ENCODE measurements at regions of chr15 and their contacts with region 1.

Region 1: DNA sequence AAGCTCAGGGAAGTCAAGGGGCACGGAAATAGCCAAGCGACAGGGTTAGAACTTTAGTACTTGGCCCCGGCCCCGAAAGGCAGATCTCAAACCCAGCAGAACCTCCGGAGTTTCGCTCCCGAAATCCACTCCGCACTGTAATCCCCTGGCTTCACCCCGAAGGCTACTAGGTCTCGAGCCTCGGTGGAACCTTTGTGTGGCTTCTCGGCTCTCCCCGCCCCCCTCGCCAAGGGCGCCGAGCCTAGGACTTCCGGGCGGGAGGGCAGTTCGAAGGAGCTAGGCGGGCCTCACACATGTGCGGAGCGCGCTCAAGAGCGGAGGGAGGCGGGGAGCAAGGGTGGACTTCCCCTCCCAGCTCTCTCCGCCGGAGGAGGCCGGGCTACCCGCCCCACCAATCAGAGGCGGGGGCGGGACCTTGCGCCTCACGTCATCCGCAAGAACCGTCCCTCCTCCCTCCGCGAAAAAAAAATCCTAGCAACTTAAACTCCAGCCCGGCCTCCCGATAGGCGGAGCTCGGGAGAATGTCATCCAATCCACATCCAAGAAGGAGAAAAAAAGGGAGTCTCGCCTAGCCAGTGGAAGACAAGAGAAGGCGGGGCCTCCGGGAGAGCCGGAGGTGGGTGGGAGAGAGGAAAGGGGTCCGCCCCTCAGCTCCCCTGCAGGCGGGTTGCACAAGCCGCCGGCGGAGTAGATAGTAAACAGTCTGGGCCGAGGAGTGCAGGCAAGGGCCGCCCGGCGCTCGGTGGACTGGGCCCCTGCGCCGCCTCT is 2.4 kb upstream of the SIN3A start:
- DNase-seq: peak; percentile 94 to 100 (median 97)
- ATAC-seq: peak; percentile 40 to 41
- H3K4me3 Mint-ChIP-seq: peak overlapping the region; percentile 94 to 99 (median 97)
- H3K27ac Mint-ChIP-seq: peak overlapping the region; percentile 94 to 99 (median 98)
- H3K4me1 Mint-ChIP-seq: peaks cover 24 to 47% (median 37%) of the 10 kb centered on the region in 4 donors
- H3K27me3 Mint-ChIP-seq: no peaks in the 10 kb centered on the region

Region 2: DNA sequence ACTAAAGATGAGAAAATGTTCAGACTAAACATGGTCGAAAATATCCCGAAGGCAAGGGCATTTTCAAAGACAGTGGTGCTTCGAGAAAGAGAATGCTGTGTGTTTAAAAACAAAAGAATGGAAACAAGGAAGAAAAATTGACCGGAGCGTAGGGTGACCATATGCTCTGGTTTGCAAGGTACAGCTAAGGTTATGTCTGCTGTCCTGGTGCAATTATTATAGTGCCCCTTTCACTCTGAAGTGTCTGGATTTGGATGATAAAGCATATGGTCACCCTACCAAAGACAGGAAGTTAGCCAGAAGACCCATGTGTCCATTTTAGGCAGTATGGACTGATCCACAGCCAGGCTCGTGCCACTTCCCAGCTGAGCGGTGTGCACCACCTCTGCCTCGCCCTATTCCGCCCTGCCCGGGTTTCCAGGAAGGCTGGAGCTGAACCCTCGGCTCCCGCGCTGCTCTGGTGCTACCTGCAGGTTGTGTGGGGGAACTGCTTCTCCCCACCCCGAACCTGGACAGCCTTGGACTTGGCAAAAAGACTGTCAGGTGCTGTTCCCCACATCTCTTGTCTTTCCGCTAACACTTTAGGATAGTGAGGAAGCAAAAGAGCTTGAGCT is 146.0 kb before region 1 on chr15:
- POLR2A ChIA-PET with region 1: no interaction called
- DNase-seq: peak in 1 of 10 donors; percentile 7
- ATAC-seq: peak in 1 of 2 donors; percentile 30
- H3K4me3 Mint-ChIP-seq: no peak overlapping the region
- H3K27ac Mint-ChIP-seq: no peak overlapping the region
- H3K4me1 Mint-ChIP-seq: peaks cover 0 to 6% (median 3%) of the 10 kb centered on the region in 4 donors
- H3K27me3 Mint-ChIP-seq: peaks cover 10 to 49% (median 34%) of the 10 kb centered on the region in 5 donors

Region 3: GRCh38 chr15:75431682-75432081 is 22.2 kb before region 1 on chr15:
- POLR2A ChIA-PET with region 1: interaction called, 10 read pairs
- DNase-seq: no peak
- ATAC-seq: no peak
- H3K4me3 Mint-ChIP-seq: no peak overlapping the region
- H3K27ac Mint-ChIP-seq: peak overlapping the region in 1 of 10 donors; percentile 8
- H3K4me1 Mint-ChIP-seq: peaks cover 18 to 52% (median 45%) of the 10 kb centered on the region in 4 donors
- H3K27me3 Mint-ChIP-seq: no peaks in the 10 kb centered on the region

Region 4: GRCh38 chr15:75578948-75579920 is 125.3 kb after region 1 on chr15 and contains the start of gene PTPN9:
- POLR2A ChIA-PET with region 1: interaction called, 38 read pairs
- DNase-seq: peak; percentile 33 to 82 (median 60)
- ATAC-seq: peak; percentile 80 to 84
- H3K4me3 Mint-ChIP-seq: peak within 1 kb of the TSS; percentile 91 to 96 (median 92)
- H3K27ac Mint-ChIP-seq: peak within 1 kb of the TSS; percentile 88 to 95 (median 92)
- H3K4me1 Mint-ChIP-seq: peaks cover 13 to 28% (median 22%) of the 10 kb centered on the region in 4 donors
- H3K27me3 Mint-ChIP-seq: no peaks in the 10 kb centered on the region
- polyA plus RNA-seq, gene PTPN9: 12.9 to 19.6 (median 18.2) TPM

Region 5: DNA sequence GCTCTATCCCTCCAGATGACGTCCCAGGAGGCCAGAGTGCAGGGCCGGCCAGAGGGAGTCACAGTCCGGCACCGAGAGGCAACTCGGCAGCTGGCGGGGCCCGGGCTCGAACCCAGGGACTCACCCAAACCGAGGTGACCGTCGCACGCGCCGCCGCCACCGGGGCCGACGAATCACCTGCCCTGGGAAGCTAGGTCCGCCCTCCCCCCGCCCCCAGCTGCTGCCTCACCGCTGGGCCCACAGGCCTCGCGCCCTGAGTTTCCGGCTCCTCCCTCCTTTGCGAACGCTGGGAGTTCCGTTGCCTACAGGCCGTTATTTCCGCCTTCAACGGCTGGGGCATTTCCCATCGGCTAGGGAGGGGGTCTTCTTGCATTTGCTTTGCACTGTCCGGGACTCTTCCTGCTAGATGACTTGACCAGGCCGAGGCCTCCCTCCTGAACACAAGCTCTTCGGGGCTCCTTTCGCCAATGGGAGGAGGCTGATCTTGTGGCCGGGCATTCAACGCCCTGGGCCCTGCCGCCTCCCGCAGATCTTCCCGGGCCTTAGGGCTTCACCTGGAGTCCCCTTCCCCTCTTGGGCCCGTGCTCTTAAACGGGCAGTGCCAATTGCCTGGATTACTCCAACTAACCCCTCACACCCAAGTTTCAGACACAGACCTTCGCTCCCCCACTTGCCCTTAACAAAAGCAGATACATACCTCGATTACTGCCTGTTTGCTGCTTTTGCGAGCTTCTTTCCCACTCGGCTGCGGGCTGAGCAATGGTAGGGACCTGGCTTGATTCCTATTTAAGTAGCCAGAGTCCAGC is 171.9 kb after region 1 on chr15 and contains the start of gene SNUPN:
- POLR2A ChIA-PET with region 1: interaction called, 52 read pairs
- DNase-seq: peak; percentile 83 to 96 (median 90)
- ATAC-seq: peak; percentile 89 to 92
- H3K4me3 Mint-ChIP-seq: peak within 1 kb of the TSS; percentile 90 to 100 (median 96)
- H3K27ac Mint-ChIP-seq: peak within 1 kb of the TSS; percentile 91 to 100 (median 98)
- H3K4me1 Mint-ChIP-seq: peaks cover 16 to 39% (median 32%) of the 10 kb centered on the region in 4 donors
- H3K27me3 Mint-ChIP-seq: no peaks in the 10 kb centered on the region
- polyA plus RNA-seq, gene SNUPN: 20.1 to 33.7 (median 21.7) TPM

Region 6: GRCh38 chr15:75647370-75648155 is 193.7 kb after region 1 on chr15 and contains the start of gene SNX33:
- POLR2A ChIA-PET with region 1: interaction called, 207 read pairs
- DNase-seq: peak in 9 of 10 donors; percentile 12 to 68 (median 48)
- ATAC-seq: peak; percentile 70 to 83
- H3K4me3 Mint-ChIP-seq: peak within 1 kb of the TSS; percentile 79 to 93 (median 87)
- H3K27ac Mint-ChIP-seq: peak within 1 kb of the TSS; percentile 61 to 88 (median 78)
- H3K4me1 Mint-ChIP-seq: peaks cover 11 to 37% (median 33%) of the 10 kb centered on the region in 4 donors
- H3K27me3 Mint-ChIP-seq: no peaks in the 10 kb centered on the region
- polyA plus RNA-seq, gene SNX33: 0.05 to 0.44 (median 0.30) TPM

Measured in naive thymus-derived CD8-positive, alpha-beta T cell (primary cell).